GM13977 (cell line): ENCODE measurements at regions of chr4 and their contacts with region 1.

Region 1: GRCh38 chr4:81466841-81467671 is 4.7 kb downstream of the RASGEF1B start:
- DNase-seq: peak; percentile 56
- CTCF ChIP-seq: peak; percentile 88

Region 2: DNA sequence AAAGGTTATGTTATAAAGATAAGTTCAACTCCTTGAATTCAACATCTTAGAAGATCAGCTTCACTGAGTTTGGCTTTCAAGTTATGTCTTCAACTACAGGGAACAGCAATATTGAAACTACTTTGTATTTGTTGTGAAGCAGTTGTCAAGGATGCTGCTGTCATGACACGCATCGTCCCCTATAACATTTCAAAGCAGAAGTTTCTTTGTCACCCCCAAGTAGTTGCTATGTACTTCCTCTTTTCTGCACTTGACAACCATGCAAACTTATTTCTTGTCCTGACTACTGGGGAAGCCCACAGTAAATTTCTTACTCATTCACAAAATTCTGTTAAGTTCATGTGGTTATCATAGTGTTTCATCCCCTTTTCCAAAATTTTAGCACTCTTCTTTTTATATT is 1408.3 kb before region 1 on chr4:
- in situ Hi-C with region 1: no loop called
- DNase-seq: peak; percentile 54
- CTCF ChIP-seq: no peak

Region 3: DNA sequence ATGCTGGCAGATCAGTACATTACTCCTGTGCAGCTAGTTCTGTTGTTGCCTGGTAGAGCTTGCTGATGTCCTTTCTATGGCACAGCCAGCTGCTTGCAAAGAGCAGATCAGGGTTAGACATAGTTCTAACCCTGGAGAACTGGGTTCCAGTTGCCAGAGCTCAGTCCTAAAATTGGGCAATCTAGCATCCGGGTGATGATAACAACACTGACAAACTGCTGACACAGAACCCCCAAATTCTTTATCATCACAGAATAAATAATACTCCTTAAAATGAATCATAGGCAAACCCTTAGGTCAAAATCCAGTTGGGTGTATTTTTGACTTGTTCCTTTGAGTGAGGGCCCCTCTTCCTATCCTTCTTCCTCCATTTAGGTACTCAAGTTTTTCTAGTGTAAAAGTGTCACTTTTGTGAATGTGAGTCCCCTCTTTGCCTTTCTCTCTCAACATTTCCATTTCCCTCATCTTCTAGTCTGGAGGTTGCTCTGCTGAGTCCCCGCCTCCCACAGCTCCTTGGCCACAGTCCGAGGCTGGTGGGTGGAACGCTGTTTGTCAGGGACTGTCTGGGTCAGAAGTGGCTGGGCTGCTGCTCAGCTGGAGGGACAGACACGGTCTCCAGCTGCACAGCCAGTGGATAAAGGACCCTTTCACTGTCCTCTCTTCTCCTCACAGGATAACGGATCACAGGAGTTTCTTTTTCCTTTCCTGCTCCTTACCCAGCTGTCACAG is 98.2 kb after region 1 on chr4:
- in situ Hi-C with region 1: no loop called
- DNase-seq: no peak
- CTCF ChIP-seq: no peak

Region 4: GRCh38 chr4:81844717-81845116 is 377.7 kb after region 1 on chr4:
- in situ Hi-C with region 1: loop called (anchors 10 kb)
- DNase-seq: peak; percentile 48
- CTCF ChIP-seq: peak; percentile 86

Region 5: GRCh38 chr4:82071951-82072350 is 604.9 kb after region 1 on chr4:
- in situ Hi-C with region 1: no loop called
- DNase-seq: no peak
- CTCF ChIP-seq: no peak